ENCODE measurements at regions of chr3 and their contacts with region 1.

Region 1: GRCh38 chr3:16550676-16551341 is 37.3 kb upstream of the RFTN1 start:
- DNase-seq: peak in 1 of 2 donors; percentile 77
- ATAC-seq: peak; percentile 68 to 91 (median 78)
- H3K4me3 ChIP-seq: peak overlapping the region in 6 of 10 donors; percentile 7 to 35 (median 26)
- H3K27ac ChIP-seq: peak overlapping the region in 6 of 10 donors; percentile 4 to 62 (median 51)
- H3K4me1 ChIP-seq: peaks cover 0 to 37% (median 17%) of the 10 kb centered on the region in 9 donors
- H3K27me3 ChIP-seq: no peaks in the 10 kb centered on the region
- CTCF ChIP-seq: peak; percentile 80 to 96 (median 91)

Region 2: DNA sequence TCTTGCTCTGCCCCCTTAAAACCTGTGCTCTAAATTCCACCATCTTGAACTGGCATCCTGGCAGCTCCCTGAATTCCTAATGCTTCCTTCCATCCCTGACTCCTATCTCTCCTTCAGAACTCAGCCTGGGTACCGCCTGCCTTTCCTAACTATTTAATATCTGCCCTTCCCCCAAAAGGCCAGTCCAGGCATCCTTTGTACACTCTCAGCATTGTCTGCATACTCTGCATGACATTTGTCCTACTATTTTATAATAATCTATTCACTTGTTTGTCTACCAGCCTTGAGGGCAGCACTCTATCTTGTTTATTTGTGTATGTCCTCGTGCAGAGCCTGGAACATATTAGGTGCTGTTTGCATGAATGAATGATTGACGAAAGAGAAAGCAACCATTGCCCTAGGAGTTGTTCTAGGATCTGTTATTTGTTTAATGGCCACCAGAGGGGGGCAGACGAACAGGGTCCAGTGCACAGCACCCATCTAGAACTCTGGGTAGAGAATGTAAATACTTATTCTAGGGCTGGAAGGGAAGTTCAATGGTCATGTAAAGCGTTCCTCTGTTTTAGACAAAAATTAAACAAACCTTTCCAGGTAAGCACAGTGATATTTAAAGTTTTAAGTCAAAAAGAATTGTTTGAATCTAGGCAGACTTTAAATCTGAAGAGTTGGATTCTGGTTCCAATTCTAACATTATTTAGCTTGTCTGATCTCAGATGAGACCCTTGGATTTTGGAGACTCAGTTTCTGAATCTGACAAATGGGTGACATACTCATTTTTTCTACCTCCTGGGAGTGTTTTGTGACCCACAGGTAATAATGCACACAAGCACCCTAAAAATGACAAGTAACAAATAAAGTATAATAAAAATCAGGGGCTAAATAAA is 502.1 kb before region 1 on chr3:
- intact Hi-C with region 1: loop called in 3 of 10 experiments (anchors 10 kb)
- DNase-seq: peak in 1 of 2 donors; percentile 68
- ATAC-seq: peak; percentile 75 to 89 (median 85)
- H3K4me3 ChIP-seq: peak overlapping the region in 2 of 10 donors; percentile 9 to 33
- H3K27ac ChIP-seq: peak overlapping the region in 1 of 10 donors; percentile 15
- H3K4me1 ChIP-seq: peaks cover 0 to 39% (median 15%) of the 10 kb centered on the region in 9 donors
- H3K27me3 ChIP-seq: no peaks in the 10 kb centered on the region
- CTCF ChIP-seq: peak; percentile 78 to 92 (median 83)

Region 3: GRCh38 chr3:16264708-16265454 is 285.9 kb before region 1 on chr3 and contains the starts of genes DPH3 and OXNAD1:
- intact Hi-C with region 1: loop called in 8 of 10 experiments (anchors 1 to 5 kb)
- DNase-seq: peak; percentile 99 to 100
- ATAC-seq: peak; percentile 99 to 100 (median 100)
- H3K4me3 ChIP-seq: peak within 1 kb of the TSS; percentile 59 to 98 (median 78)
- H3K27ac ChIP-seq: peak within 1 kb of the TSS; percentile 81 to 93 (median 91)
- H3K4me1 ChIP-seq: peaks cover 5 to 63% (median 46%) of the 10 kb centered on the region in 9 donors
- H3K27me3 ChIP-seq: no peaks in the 10 kb centered on the region
- CTCF ChIP-seq: peak in 1 of 9 donors; percentile 7
- total RNA-seq, gene DPH3: 15.5 to 24.5 (median 18.7) TPM
- total RNA-seq, gene OXNAD1: 13.1 to 22.8 (median 18.1) TPM

Region 4: DNA sequence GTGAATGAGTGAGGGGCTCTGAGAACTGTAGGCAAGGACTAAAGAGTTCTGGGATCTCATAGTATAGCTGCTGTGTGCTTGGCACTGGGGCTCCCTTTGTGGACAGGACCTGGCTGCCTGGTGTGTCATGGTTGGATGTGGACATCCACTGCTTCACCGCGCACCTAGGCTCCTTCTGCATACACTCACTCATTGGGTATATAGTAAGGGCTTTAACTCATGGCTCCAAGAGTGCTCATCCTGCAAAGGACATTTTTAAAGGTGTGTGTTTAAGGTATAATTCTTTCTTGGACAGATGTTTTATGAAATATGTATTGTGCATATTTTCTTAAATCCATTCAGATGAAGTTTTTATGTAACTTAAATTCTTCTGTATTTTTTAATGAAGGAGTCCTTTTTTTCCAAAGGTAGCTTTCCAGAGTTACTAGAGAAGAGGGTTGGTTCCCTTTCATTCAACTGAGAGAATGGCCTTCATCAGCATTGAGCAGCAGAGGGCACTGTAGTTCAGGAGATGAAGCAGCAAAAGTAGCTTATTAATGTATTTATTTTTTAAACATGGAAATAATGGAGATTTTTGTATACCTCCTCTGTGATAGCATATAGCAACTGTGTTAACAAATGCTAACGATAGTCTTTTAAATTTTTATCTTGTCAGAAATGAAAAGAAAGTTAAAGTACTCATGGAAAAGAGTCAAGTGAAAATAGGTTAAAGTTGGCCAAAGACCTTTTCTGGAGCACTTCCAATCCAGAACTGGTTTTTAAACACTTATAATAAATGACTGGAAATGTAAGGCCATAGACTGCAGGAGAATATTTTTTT is 260.6 kb before region 1 on chr3:
- intact Hi-C with region 1: loop called in 9 of 10 experiments (anchors 1 to 5 kb)
- DNase-seq: peak in 1 of 2 donors; percentile 54
- ATAC-seq: peak in 4 of 8 donors; percentile 34 to 65 (median 44)
- H3K4me3 ChIP-seq: no peak overlapping the region
- H3K27ac ChIP-seq: peak overlapping the region in 7 of 10 donors; percentile 4 to 88 (median 73)
- H3K4me1 ChIP-seq: peaks cover 26 to 76% (median 60%) of the 10 kb centered on the region in 9 donors
- H3K27me3 ChIP-seq: no peaks in the 10 kb centered on the region
- CTCF ChIP-seq: peak; percentile 47 to 95 (median 85)

Region 5: DNA sequence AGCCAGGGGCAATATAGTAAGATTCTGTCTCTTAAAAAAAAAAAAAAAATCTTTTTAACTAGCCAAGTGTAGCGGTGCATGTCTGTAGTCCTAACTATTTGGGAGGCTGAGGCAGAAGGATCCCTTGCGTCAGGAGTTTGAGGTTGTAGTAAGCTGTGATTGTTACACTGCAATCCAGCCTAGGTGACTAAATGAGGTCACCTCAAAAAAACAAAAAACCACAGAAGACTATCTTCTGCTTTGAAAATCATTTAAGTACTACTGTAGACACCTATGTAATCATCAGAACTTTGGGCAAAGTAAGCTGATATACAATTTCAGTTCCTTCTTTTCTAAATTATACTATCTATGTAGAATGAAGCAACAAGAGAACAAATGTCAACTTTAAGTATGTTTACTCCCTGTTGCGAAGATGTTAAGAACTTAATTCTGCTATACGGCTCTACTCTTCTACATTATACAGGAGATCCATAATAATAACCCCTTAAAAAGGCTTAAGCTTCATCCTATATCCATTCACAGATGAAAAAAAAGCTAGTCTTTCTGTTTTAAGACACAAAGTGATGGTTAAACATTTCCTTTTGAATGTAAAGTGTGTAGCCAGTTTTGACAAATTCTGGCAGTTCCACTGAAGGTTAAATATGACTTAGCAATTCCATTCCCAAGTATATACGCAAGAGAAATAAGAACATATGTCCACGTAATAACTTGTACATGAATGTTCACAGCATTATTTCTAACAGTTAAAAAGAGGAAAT is 39.2 kb after region 1 on chr3:
- intact Hi-C with region 1: no loop called
- DNase-seq: no peak
- ATAC-seq: no peak
- H3K4me3 ChIP-seq: no peak overlapping the region
- H3K27ac ChIP-seq: no peak overlapping the region
- H3K4me1 ChIP-seq: no peaks in the 10 kb centered on the region
- H3K27me3 ChIP-seq: no peaks in the 10 kb centered on the region
- CTCF ChIP-seq: no peak